ENCODE measurements at regions of chr2 and their contacts with region 1.

Region 1: GRCh38 chr2:68909793-68910674 is 38.8 kb upstream of the BMP10 start:
- DNase-seq: peak; percentile 62
- H3K4me3 ChIP-seq: no peak overlapping the region
- H3K27ac ChIP-seq: no peak overlapping the region
- H3K4me1 ChIP-seq: peaks cover 0 to 7% of the 10 kb centered on the region in 2 donors
- H3K27me3 ChIP-seq: no peaks in the 10 kb centered on the region
- CTCF ChIP-seq: peak; percentile 86 to 92 (median 87)
- POLR2A ChIP-seq: no peak

Region 2: DNA sequence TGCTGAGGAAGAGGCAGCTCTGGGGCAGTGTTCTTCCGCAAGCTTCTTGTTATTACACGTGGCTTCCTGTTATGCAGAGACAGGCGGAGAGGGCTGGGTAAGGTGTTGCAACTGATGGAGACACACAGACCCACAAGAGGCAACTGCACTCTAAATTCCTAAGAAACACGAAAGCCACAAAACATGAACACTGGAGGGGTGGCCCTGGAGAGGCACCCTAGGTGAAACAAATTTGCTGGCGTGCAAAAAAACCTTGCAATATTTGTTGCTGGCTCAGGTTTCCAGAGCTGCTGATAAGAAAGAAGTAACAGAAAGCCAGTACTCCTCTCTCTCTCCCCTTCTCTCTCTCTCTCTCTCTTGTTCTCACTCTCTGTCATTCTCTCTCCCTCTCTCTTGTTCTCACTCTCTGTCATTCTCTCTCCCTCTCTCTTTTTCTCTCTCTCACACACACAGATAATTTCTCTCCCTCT is 143.6 kb before region 1 on chr2:
- intact Hi-C with region 1: loop called (anchors 5 kb)
- DNase-seq: peak in 1 of 2 donors; percentile 60
- H3K4me3 ChIP-seq: no peak overlapping the region
- H3K27ac ChIP-seq: peak overlapping the region; percentile 41 to 52
- H3K4me1 ChIP-seq: peaks cover 0 to 4% of the 10 kb centered on the region in 2 donors
- H3K27me3 ChIP-seq: no peaks in the 10 kb centered on the region
- CTCF ChIP-seq: no peak
- POLR2A ChIP-seq: no peak

Measured in breast epithelium (tissue), 4 donors.